ENCODE measurements at regions of chr6 and their contacts with region 1.

Region 1: GRCh38 chr6:149717588-149718458 is at the start of gene LATS1:
- DNase-seq: peak; percentile 84
- H3K4me3 ChIP-seq: peak within 1 kb of the TSS; percentile 65 to 98 (median 96)
- H3K27ac ChIP-seq: peak within 1 kb of the TSS; percentile 81
- H3K4me1 ChIP-seq: peaks cover 16% of the 10 kb centered on the region
- H3K27me3 ChIP-seq: no peaks in the 10 kb centered on the region
- CTCF ChIP-seq: no peak
- POLR2A ChIP-seq: peak; percentile 98
- total RNA-seq, gene LATS1: 27.6 and 28.7 TPM in 2 replicates

Region 2: GRCh38 chr6:149565527-149566409 is 152.1 kb before region 1 on chr6 and contains the start of gene GINM1:
- CTCF ChIA-PET with region 1: interaction called, 3 read pairs
- POLR2A ChIA-PET with region 1: no interaction called
- dilution Hi-C with region 1: no loop called
- intact Hi-C with region 1: loop called (anchors 5 kb)
- DNase-seq: peak; percentile 97
- H3K4me3 ChIP-seq: peak within 1 kb of the TSS; percentile 75 to 93 (median 85)
- H3K27ac ChIP-seq: peak within 1 kb of the TSS; percentile 82
- H3K4me1 ChIP-seq: peaks cover 16% of the 10 kb centered on the region
- H3K27me3 ChIP-seq: no peaks in the 10 kb centered on the region
- CTCF ChIP-seq: peak; percentile 52 to 71
- POLR2A ChIP-seq: no peak
- total RNA-seq, gene GINM1: 38.0 and 38.2 TPM in 2 replicates

Region 3: GRCh38 chr6:149701714-149702113 is 16.1 kb before region 1 on chr6:
- CTCF ChIA-PET with region 1: interaction called, 12 read pairs
- POLR2A ChIA-PET with region 1: no interaction called
- dilution Hi-C with region 1: no loop called
- intact Hi-C with region 1: no loop called
- DNase-seq: no peak
- H3K4me3 ChIP-seq: no peak overlapping the region
- H3K27ac ChIP-seq: no peak overlapping the region
- H3K4me1 ChIP-seq: no peaks in the 10 kb centered on the region
- H3K27me3 ChIP-seq: no peaks in the 10 kb centered on the region
- CTCF ChIP-seq: no peak
- POLR2A ChIP-seq: no peak

Region 4: GRCh38 chr6:149746147-149746946 is 28.5 kb after region 1 on chr6 and contains the start of gene NUP43:
- CTCF ChIA-PET with region 1: interaction called, 10 read pairs
- POLR2A ChIA-PET with region 1: no interaction called
- dilution Hi-C with region 1: no loop called
- intact Hi-C with region 1: loop called (anchors 1 kb)
- DNase-seq: peak; percentile 92
- H3K4me3 ChIP-seq: peak within 1 kb of the TSS; percentile 83 to 97 (median 96)
- H3K27ac ChIP-seq: peak within 1 kb of the TSS; percentile 47
- H3K4me1 ChIP-seq: peaks cover 12% of the 10 kb centered on the region
- H3K27me3 ChIP-seq: no peaks in the 10 kb centered on the region
- CTCF ChIP-seq: peak; percentile 34 to 53
- POLR2A ChIP-seq: peak; percentile 82
- total RNA-seq, gene NUP43: 49.0 and 56.8 TPM in 2 replicates

Measured in endothelial cell of umbilical vein (primary cell).